ENCODE measurements at regions of chr16 and their contacts with region 1.

Region 1: DNA sequence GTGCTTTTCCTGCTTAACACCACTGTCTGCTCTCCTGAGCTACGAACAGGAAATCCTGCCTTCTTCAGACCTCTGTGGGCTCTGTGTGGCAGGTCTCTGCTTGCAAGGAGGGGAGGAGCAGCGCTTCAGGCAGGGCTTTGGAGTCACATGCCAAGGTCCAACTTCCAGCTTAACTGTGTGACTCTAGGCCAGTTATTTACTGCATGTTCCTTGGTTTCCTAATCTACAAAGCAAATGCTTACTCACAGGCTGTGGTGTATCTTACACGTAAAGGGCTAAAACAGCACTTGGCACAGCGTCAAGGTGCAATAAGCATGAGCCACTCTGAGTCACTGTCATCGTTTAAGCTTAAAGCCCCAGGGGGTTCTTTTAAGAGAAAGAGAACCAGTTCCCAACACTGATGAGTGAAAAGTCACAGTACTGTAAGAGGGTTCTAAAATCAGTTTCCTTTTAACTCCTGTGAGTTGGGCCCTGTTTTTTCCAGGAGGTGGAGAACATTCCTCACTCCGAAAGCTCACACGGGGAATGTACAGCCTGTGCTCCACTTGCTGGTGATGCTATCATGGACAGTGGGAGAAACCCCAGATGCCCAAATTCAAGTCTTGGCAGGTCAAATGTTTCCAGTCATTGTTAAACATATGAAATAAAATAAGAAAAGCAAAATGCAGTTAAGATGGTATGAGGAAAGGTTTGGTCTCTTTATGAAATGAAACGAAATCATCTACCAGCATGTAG is 54.1 kb upstream of the BCAR1 start:
- DNase-seq: peak; percentile 71
- ATAC-seq: peak; percentile 95
- H3K4me3 ChIP-seq: no peak overlapping the region
- H3K27ac ChIP-seq: peak overlapping the region; percentile 55
- H3K4me1 ChIP-seq: peaks cover 12% of the 10 kb centered on the region
- H3K27me3 ChIP-seq: no peaks in the 10 kb centered on the region
- CTCF ChIP-seq: no peak
- EP300 ChIP-seq: peak in 1 of 2 experiments; percentile 13; a peak in 1 of 4 replicates
- POLR2A ChIP-seq: no peak
- RAD21 ChIP-seq: no peak

Region 2: DNA sequence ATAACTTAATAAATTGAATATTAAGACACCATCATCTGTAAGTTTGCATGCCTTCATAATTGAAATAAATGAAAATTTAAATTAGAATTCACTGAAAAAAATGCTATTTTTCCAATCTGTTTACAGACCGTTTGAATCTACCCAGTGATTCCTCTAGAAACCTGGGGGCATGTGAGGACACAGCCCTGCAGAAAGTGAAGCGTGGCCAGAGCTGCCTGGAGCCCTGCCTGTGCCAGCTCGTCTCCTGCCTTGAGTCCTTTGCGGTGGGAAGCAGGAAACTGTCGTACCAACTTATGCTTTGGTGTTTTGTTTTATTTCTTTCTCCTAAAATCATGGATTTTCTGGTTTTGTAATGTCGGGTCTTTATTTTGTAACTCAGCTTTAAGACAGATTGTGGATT is 463.1 kb before region 1 on chr16:
- CTCF ChIA-PET with region 1: no interaction called
- POLR2A ChIA-PET with region 1: no interaction called
- RAD21 ChIA-PET with region 1: no interaction called
- SMC1A ChIA-PET with region 1: no interaction called
- in situ Hi-C with region 1: no loop called
- intact Hi-C with region 1: no loop called
- DNase-seq: no peak
- ATAC-seq: no peak
- H3K4me3 ChIP-seq: no peak overlapping the region
- H3K27ac ChIP-seq: no peak overlapping the region
- H3K4me1 ChIP-seq: peaks cover 3% of the 10 kb centered on the region
- H3K27me3 ChIP-seq: no peaks in the 10 kb centered on the region; a peak in 1 of 4 replicates
- CTCF ChIP-seq: no peak
- EP300 ChIP-seq: no peak
- POLR2A ChIP-seq: no peak
- RAD21 ChIP-seq: no peak

Region 3: GRCh38 chr16:75319513-75320411 is 14.2 kb after region 1 on chr16:
- CTCF ChIA-PET with region 1: interaction called, 12 read pairs
- POLR2A ChIA-PET with region 1: interaction called, 10 read pairs
- RAD21 ChIA-PET with region 1: interaction called, 50 read pairs
- SMC1A ChIA-PET with region 1: interaction called, 83 read pairs
- in situ Hi-C with region 1: no loop called
- intact Hi-C with region 1: no loop called
- DNase-seq: peak; percentile 78
- ATAC-seq: peak; percentile 76
- H3K4me3 ChIP-seq: peak overlapping the region; percentile 4; the same call in 1 of the 2 replicates
- H3K27ac ChIP-seq: peak overlapping the region; percentile 79
- H3K4me1 ChIP-seq: peaks cover 34% of the 10 kb centered on the region
- H3K27me3 ChIP-seq: no peaks in the 10 kb centered on the region
- CTCF ChIP-seq: no peak
- EP300 ChIP-seq: peak; percentile 67 to 86; a peak in 3 of 4 replicates
- POLR2A ChIP-seq: no peak
- RAD21 ChIP-seq: 0 out of 2 replicates have a peak, but pooled peaks have one; percentile 14

Region 4: DNA sequence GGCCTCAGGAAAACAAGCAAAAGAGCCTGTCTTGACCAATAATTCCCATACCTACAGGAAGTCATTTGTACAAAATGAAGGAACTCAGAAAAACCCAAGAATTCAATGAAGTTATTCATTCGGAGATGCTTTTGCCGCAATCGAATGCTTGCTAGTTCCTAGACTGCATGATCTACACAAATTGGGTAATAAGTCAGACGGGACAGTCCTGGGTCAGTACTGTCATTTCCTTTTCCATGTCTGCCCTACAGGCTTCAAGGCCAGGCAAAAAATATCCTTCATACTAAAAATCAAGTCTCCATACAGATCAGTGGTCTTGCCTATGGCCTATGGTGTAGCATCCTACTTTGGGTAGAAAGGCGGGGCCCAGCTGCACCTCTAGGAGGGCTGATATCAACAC is 56.4 kb after region 1 on chr16:
- CTCF ChIA-PET with region 1: no interaction called
- POLR2A ChIA-PET with region 1: no interaction called
- RAD21 ChIA-PET with region 1: no interaction called
- SMC1A ChIA-PET with region 1: interaction called, 10 read pairs
- in situ Hi-C with region 1: no loop called
- intact Hi-C with region 1: no loop called
- DNase-seq: no peak
- ATAC-seq: no peak
- H3K4me3 ChIP-seq: no peak overlapping the region
- H3K27ac ChIP-seq: no peak overlapping the region
- H3K4me1 ChIP-seq: no peaks in the 10 kb centered on the region
- H3K27me3 ChIP-seq: no peaks in the 10 kb centered on the region
- CTCF ChIP-seq: no peak
- EP300 ChIP-seq: no peak
- POLR2A ChIP-seq: no peak
- RAD21 ChIP-seq: no peak

Measured in GM12878 (cell line).